Psoas muscle (tissue), 8 donors: ENCODE measurements at regions of chr11 and their contacts with region 1.

Region 1: GRCh38 chr11:33996498-33997454 is 54.8 kb upstream of the CAPRIN1 start:
- DNase-seq: peak; percentile 50 to 64
- ATAC-seq: peak; percentile 96 to 99 (median 98)
- H3K4me3 ChIP-seq: no peak overlapping the region
- H3K27ac ChIP-seq: no peak overlapping the region
- H3K4me1 ChIP-seq: peaks cover 4% of the 10 kb centered on the region
- H3K27me3 ChIP-seq: no peaks in the 10 kb centered on the region
- CTCF ChIP-seq: peak; percentile 85

Region 2: GRCh38 chr11:34051349-34052035 is 54.7 kb after region 1 on chr11 and contains the start of gene CAPRIN1:
- intact Hi-C with region 1: loop called (anchors 1 to 2 kb)
- DNase-seq: peak; percentile 87 to 94
- ATAC-seq: peak; percentile 91 to 92 (median 91)
- H3K4me3 ChIP-seq: peak within 1 kb of the TSS; percentile 92
- H3K27ac ChIP-seq: peak within 1 kb of the TSS; percentile 95
- H3K4me1 ChIP-seq: peaks cover 40% of the 10 kb centered on the region
- H3K27me3 ChIP-seq: no peaks in the 10 kb centered on the region
- CTCF ChIP-seq: no peak
- total RNA-seq, gene CAPRIN1: 70.3 to 122 (median 109) TPM

Region 3: DNA sequence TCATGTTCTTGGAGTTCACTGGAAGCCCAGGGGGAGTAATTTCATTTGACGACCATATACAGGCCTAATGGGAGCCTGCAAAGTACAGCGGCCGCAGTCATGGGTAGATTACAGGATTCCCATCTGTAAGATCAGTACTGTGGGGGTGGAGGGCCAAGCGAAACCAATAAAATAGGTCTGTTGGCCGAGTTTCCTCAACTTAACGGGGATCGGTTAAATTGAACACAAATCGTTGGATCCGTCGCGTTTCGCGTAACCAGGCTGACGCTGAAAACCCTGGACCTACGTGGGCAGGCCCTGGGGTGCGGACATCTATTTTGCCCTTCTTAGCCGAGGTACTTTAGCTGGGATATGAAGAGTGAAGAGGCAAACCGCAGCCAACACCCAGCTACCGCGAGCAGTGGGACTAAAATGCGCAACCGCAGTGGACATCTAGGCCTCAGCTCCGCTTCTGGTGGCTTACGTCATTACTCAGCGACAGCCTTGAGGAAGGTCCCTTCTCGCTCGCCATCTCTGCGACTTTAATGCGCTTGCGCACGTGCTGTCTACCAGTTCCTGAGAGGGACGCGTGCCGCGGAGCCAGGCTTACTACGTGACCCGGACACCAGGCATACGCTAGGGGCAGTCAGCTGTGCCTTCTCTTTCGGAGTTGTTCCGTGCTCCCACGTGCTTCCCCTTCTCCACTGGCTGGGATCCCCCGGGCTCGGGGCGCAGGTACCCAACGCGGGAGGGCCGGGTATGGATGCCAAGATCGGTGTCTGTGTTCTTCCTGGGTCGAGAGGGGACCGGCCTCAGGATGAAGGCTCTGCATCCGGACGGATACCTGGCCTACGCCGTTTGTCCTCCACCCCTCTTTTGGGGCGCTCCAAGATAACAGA is 108.5 kb after region 1 on chr11 and contains the start of gene NAT10:
- intact Hi-C with region 1: loop called (anchors 5 to 10 kb)
- DNase-seq: peak; percentile 97 to 99
- ATAC-seq: peak; percentile 94 to 98 (median 97)
- H3K4me3 ChIP-seq: peak within 1 kb of the TSS; percentile 91
- H3K27ac ChIP-seq: peak within 1 kb of the TSS; percentile 96
- H3K4me1 ChIP-seq: peaks cover 26% of the 10 kb centered on the region
- H3K27me3 ChIP-seq: no peaks in the 10 kb centered on the region
- CTCF ChIP-seq: peak; percentile 16
- total RNA-seq, gene NAT10: 26.7 to 51.5 (median 37.0) TPM

Region 4: GRCh38 chr11:34114471-34114870 is 117.7 kb after region 1 on chr11:
- intact Hi-C with region 1: loop called (anchors 5 to 10 kb)
- DNase-seq: no peak
- ATAC-seq: peak; percentile 31 to 78 (median 70)
- H3K4me3 ChIP-seq: no peak overlapping the region
- H3K27ac ChIP-seq: no peak overlapping the region
- H3K4me1 ChIP-seq: no peaks in the 10 kb centered on the region
- H3K27me3 ChIP-seq: no peaks in the 10 kb centered on the region
- CTCF ChIP-seq: no peak

Region 5: DNA sequence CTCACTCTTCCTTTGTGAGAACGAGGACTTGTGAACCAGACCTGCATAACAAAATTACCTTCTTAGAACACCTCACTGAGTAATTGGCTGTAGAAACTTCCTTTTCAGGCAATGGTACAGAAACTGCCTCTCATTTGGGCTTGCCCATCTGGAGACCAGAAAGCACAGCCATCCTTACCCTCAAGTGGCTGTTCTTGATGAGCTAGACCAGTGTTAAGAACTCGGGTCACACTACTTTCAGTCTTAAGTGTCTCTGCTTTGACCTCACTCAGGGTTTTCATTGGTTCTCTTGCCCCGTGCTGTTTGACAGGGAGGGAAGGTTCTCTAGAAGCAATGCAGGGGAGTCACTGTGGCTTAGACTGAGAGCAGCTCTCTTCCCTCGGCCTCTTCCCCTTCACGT is 138.0 kb after region 1 on chr11:
- intact Hi-C with region 1: loop called in 1 of 2 experiments (anchors 10 kb)
- DNase-seq: no peak
- ATAC-seq: no peak
- H3K4me3 ChIP-seq: no peak overlapping the region
- H3K27ac ChIP-seq: no peak overlapping the region
- H3K4me1 ChIP-seq: no peaks in the 10 kb centered on the region
- H3K27me3 ChIP-seq: no peaks in the 10 kb centered on the region
- CTCF ChIP-seq: no peak

Region 6: DNA sequence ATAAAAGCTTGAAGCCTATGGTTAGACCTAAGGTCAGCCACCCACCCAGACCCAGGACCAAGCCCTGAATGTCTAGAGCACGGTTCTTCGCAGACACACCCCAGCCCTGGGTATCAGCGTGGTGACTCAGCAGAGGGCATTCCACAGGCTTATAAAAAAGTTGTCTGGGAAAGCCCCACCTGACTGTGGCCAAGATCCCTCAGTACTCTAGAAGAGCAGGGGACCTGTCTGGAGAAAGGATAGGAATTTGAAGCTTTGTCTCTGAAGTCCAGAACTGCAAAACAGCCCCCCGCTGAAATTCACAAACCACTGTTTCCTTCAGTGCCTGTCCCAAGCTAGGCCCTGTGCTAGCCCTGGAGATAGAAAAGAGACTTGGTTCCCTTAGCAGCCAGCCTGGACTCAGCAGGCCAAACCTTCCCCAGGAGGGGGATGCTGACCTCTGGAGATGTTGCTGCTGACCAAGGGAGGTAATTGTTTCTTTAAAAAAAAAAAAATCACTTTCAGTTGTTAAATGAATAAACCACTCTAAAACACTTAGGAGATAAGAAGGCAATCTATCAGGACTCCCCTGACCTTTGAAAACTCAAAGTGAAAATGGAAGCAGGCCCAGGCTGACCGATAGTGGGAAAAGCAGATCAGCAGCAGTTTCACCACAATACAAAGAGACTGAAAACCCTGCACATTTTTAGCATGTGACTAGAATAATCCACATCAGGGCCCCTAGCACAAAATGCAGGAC is 247.1 kb after region 1 on chr11:
- intact Hi-C with region 1: no loop called
- DNase-seq: no peak
- ATAC-seq: peak; percentile 83 to 93 (median 91)
- H3K4me3 ChIP-seq: no peak overlapping the region
- H3K27ac ChIP-seq: peak overlapping the region; percentile 46
- H3K4me1 ChIP-seq: peaks cover 32% of the 10 kb centered on the region
- H3K27me3 ChIP-seq: no peaks in the 10 kb centered on the region
- CTCF ChIP-seq: no peak

Region 7: GRCh38 chr11:34366522-34366921 is 369.7 kb after region 1 on chr11:
- intact Hi-C with region 1: loop called in 1 of 2 experiments (anchors 5 kb)
- DNase-seq: no peak
- ATAC-seq: no peak
- H3K4me3 ChIP-seq: no peak overlapping the region
- H3K27ac ChIP-seq: no peak overlapping the region
- H3K4me1 ChIP-seq: no peaks in the 10 kb centered on the region
- H3K27me3 ChIP-seq: no peaks in the 10 kb centered on the region
- CTCF ChIP-seq: peak; percentile 27